ENCODE measurements at regions of chr4 and their contacts with region 1.

Region 1: DNA sequence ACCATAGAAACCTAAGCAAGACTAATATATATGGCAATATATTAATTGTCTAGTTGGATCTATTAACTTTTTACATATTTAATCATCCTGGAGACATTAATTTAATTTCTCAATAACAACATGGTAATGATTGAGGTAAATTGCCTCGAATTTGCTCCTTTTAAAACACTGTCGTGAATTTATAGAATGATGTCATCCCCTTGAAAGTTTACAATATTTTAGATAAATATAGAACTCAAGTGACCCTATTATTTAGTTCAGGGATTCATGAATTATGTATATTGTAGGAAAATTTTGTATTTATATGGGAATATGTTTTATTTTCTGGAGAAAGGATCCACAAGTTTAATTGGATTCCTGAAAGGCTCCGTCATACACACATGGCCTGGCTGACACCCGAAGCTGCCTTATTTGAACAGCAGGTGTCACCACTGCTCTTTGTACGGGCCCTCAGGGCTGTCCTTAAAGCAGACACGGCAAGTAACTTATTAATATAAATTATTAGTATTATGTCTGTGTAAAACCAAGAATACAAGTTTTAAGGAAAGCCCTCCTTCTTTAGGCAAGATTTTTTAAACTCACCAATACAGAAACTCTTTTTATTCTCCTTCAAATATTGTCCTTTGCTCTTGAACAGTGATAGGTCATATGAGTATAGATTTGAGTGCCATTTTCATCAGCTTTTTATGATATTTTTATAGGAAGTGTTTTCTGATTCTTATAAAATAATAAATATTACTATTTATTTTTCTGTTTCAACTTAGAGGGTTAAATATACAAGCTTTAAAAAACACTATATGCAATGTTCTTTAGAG is 1.9 kb upstream of the PLRG1 start:
- DNase-seq: peak; percentile 84
- H3K4me3 ChIP-seq: no peak overlapping the region
- H3K27ac ChIP-seq: no peak overlapping the region
- H3K4me1 ChIP-seq: peaks cover 12% of the 10 kb centered on the region
- H3K27me3 ChIP-seq: peaks cover 0 to 4% of the 10 kb centered on the region in 2 experiments
- CTCF ChIP-seq: peak; percentile 66 to 72
- POLR2A ChIP-seq: no peak

Region 2: GRCh38 chr4:154208424-154208823 is 343.7 kb before region 1 on chr4:
- CTCF ChIA-PET with region 1: no interaction called
- POLR2A ChIA-PET with region 1: no interaction called
- dilution Hi-C with region 1: no loop called
- intact Hi-C with region 1: no loop called
- DNase-seq: no peak
- H3K4me3 ChIP-seq: no peak overlapping the region
- H3K27ac ChIP-seq: no peak overlapping the region
- H3K4me1 ChIP-seq: no peaks in the 10 kb centered on the region
- H3K27me3 ChIP-seq: no peaks in the 10 kb centered on the region
- CTCF ChIP-seq: no peak
- POLR2A ChIP-seq: no peak

Region 3: GRCh38 chr4:154618708-154619315 is 66.7 kb after region 1 on chr4:
- CTCF ChIA-PET with region 1: interaction called, 112 read pairs
- POLR2A ChIA-PET with region 1: no interaction called
- dilution Hi-C with region 1: no loop called
- intact Hi-C with region 1: loop called (anchors 1 kb)
- DNase-seq: peak; percentile 52
- H3K4me3 ChIP-seq: no peak overlapping the region
- H3K27ac ChIP-seq: no peak overlapping the region
- H3K4me1 ChIP-seq: no peaks in the 10 kb centered on the region
- H3K27me3 ChIP-seq: peaks cover 0 to 4% of the 10 kb centered on the region in 2 experiments
- CTCF ChIP-seq: peak; percentile 58 to 64
- POLR2A ChIP-seq: no peak

Region 4: DNA sequence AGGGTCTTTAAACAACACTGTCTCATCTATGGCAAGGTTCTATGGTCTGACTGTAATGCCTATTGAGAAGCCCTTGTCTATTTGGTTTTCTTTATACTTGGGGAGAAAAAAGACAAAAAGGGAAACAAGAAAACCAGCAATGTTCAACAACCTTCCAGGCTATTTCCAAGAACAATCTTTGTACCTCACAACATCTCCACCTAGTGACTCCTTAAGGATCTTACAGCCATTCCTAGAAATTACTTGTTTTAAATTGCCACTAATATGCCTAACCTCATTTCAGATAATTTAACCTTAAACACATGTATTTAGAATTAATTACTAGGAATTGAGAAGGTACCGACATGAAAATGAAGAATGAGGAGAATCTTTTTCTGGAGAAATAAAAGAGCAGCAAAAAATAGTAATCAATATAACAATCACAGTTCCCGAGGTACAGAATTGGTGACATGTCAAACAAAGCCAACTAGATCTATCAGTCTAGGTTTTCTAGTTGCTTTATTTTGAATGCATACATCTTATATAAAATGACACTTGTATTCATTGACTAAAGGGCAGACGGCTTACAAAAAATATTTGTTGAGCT is 227.4 kb after region 1 on chr4:
- CTCF ChIA-PET with region 1: interaction called, 11 read pairs
- POLR2A ChIA-PET with region 1: no interaction called
- dilution Hi-C with region 1: no loop called
- intact Hi-C with region 1: loop called (anchors 1 kb)
- DNase-seq: peak; percentile 18
- H3K4me3 ChIP-seq: no peak overlapping the region
- H3K27ac ChIP-seq: no peak overlapping the region
- H3K4me1 ChIP-seq: no peaks in the 10 kb centered on the region
- H3K27me3 ChIP-seq: peaks cover 0 to 2% of the 10 kb centered on the region in 2 experiments
- CTCF ChIP-seq: peak; percentile 21 to 30
- POLR2A ChIP-seq: no peak

Region 5: GRCh38 chr4:154982187-154983047 is 430.3 kb after region 1 on chr4:
- CTCF ChIA-PET with region 1: no interaction called
- POLR2A ChIA-PET with region 1: no interaction called
- dilution Hi-C with region 1: no loop called
- intact Hi-C with region 1: loop called (anchors 1 kb)
- DNase-seq: peak; percentile 61
- H3K4me3 ChIP-seq: no peak overlapping the region
- H3K27ac ChIP-seq: no peak overlapping the region
- H3K4me1 ChIP-seq: no peaks in the 10 kb centered on the region
- H3K27me3 ChIP-seq: peaks cover 0 to 4% of the 10 kb centered on the region in 2 experiments
- CTCF ChIP-seq: peak; percentile 64
- POLR2A ChIP-seq: no peak

Region 6: GRCh38 chr4:155353923-155354540 is 802.0 kb after region 1 on chr4:
- CTCF ChIA-PET with region 1: interaction called, 4 read pairs
- POLR2A ChIA-PET with region 1: no interaction called
- dilution Hi-C with region 1: no loop called
- intact Hi-C with region 1: loop called (anchors 5 kb)
- DNase-seq: peak; percentile 76
- H3K4me3 ChIP-seq: no peak overlapping the region
- H3K27ac ChIP-seq: no peak overlapping the region
- H3K4me1 ChIP-seq: no peaks in the 10 kb centered on the region
- H3K27me3 ChIP-seq: no peaks in the 10 kb centered on the region
- CTCF ChIP-seq: peak; percentile 82 to 83
- POLR2A ChIP-seq: no peak

Region 7: DNA sequence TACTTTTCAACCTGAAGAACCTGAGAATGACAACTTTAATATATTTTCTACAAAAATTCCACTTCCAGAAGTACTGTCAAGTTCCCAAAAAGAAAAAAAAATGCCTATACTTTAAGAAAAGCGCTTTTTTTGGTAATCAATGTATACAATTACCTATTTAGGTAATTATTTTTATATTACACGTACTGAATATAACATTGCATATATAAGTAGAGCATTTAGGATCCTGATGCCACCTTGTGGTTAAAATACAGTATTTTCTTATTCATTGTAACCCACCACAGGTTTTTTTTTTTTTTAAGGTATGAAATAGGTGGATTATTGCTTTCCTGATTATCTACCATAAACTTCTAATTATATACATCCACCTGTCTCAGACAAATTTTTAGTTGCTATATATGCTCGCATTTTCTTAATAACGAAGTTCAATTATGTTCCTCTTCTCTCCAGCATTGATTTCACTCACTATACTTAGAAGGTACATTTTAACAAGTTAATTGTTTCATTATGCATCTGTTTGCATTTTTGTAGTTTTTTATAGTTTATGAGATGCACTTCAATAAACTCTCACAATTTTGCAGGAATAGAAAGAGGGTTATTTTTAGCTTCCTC is 819.5 kb after region 1 on chr4:
- CTCF ChIA-PET with region 1: interaction called, 4 read pairs
- POLR2A ChIA-PET with region 1: no interaction called
- dilution Hi-C with region 1: no loop called
- intact Hi-C with region 1: loop called (anchors 5 kb)
- DNase-seq: peak; percentile 38
- H3K4me3 ChIP-seq: no peak overlapping the region
- H3K27ac ChIP-seq: no peak overlapping the region
- H3K4me1 ChIP-seq: peaks cover 4% of the 10 kb centered on the region
- H3K27me3 ChIP-seq: peaks cover 0 to 6% of the 10 kb centered on the region in 2 experiments
- CTCF ChIP-seq: peak in 1 of 2 donors; percentile 17
- POLR2A ChIP-seq: no peak